Activated B cell treated with CpG ODN at 0.5 μM for 24 hours (primary cell): ENCODE measurements at regions of chr6 and their contacts with region 1.

Region 1: DNA sequence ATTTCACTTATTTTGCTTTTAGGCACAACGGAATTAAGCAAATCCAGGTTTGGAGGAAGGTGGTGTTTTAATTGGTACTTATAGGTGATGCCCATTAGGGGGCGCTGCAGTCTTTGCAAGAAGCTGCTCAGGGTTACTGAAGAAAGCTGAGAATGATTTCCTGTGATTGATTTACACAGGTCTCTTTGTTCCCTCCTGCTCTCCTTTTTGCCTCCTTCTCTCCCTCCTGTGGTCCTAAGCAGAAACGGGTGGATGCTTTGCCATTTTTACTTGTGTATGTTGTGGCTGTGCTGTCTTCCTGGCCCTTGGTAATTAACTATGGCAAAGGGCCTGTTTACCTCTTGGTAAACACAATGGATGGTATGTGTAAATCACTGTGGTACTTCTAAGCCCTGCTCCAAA is 97.8 kb downstream of the ANKS1A start:
- DNase-seq: no peak
- ATAC-seq: peak; percentile 31
- H3K4me3 Mint-ChIP-seq: no peak overlapping the region
- H3K27ac Mint-ChIP-seq: no peak overlapping the region
- H3K4me1 Mint-ChIP-seq: no peaks in the 10 kb centered on the region
- H3K27me3 Mint-ChIP-seq: no peaks in the 10 kb centered on the region
- CTCF ChIP-seq: peak; percentile 30

Region 2: GRCh38 chr6:35202066-35202546 is 215.3 kb after region 1 on chr6:
- CTCF ChIA-PET with region 1: interaction called, 12 read pairs
- POLR2A ChIA-PET with region 1: no interaction called
- intact Hi-C with region 1: loop called (anchors 1 kb)
- DNase-seq: no peak
- ATAC-seq: no peak
- H3K4me3 Mint-ChIP-seq: no peak overlapping the region
- H3K27ac Mint-ChIP-seq: no peak overlapping the region
- H3K4me1 Mint-ChIP-seq: no peaks in the 10 kb centered on the region
- H3K27me3 Mint-ChIP-seq: peaks cover 48% of the 10 kb centered on the region
- CTCF ChIP-seq: no peak

Region 3: DNA sequence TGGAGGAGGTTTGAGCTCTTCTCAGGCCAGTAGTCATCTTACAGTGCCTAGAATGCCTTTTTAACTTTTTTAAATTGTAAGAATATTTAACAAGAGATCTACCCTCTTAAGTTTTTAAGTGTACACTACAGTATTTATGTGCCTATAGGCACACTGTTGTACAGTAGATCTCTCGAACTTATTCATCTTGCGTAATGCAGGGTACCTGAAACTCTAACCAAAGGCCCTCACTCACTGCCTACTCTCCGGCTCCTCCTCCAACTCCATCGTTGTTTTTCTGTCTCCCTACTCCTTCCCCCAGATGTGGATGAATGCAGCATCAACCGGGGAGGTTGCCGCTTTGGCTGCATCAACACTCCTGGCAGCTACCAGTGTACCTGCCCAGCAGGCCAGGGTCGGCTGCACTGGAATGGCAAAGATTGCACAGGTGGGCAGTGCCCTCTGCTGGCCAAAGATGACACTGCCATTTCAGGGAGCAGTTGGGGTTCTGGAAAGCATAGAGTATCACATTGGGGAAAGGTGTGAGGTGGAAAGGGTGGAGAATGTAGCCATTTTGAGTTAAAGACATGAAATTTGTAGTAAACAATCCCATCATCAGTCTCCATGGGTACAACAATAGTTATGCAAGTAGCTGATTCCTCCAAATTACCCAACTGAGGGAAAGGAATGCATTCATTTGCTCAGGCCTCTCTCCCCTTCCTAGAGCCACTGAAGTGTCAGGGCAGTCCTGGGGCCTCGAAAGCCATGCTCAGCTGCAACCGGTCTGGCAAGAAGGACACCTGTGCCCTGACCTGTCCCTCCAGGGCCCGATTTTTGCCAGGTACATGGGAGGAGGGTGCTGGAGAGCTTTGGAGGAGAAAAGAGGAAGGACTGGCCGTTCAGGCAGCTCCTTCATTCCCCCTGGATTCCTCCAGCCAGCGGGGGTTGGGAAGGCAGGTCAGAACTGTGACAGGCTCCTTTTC is 254.3 kb after region 1 on chr6:
- CTCF ChIA-PET with region 1: interaction called, 7 read pairs
- POLR2A ChIA-PET with region 1: no interaction called
- intact Hi-C with region 1: loop called (anchors 1 kb)
- DNase-seq: peak; percentile 63
- ATAC-seq: peak; percentile 81
- H3K4me3 Mint-ChIP-seq: no peak overlapping the region
- H3K27ac Mint-ChIP-seq: no peak overlapping the region
- H3K4me1 Mint-ChIP-seq: no peaks in the 10 kb centered on the region
- H3K27me3 Mint-ChIP-seq: no peaks in the 10 kb centered on the region
- CTCF ChIP-seq: peak; percentile 100